ENCODE measurements at regions of chr2 and their contacts with region 1.

Region 1: GRCh38 chr2:197705121-197705911 is at the start of gene MARS2:
- DNase-seq: peak; percentile 70 to 89
- H3K4me3 ChIP-seq: peak within 1 kb of the TSS; percentile 98
- H3K27ac ChIP-seq: no peak within 1 kb of the TSS
- H3K4me1 ChIP-seq: peaks cover 15% of the 10 kb centered on the region
- H3K27me3 ChIP-seq: no peaks in the 10 kb centered on the region
- CTCF ChIP-seq: no peak
- total RNA-seq, gene MARS2: 5.1 and 6.0 TPM in 2 replicates

Region 2: DNA sequence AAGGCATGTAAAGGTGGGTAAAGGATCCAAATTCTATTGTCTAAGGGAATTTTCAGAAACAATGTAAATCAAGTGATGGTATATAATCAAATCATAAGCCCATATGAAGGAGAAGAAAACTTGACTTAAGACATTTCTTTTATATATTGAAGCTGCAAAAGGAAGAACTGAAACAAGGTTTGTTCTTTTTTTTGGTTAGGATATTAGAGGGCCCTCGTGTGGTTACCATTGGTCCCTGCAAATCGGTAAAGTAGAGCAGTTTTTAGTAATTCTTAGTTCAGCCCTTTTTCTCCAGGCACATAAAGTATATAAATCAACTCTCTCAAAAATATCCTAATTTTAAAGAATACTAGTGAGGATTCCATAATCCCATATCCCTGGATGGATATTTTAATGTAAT is 1428.3 kb before region 1 on chr2:
- CTCF ChIA-PET with region 1: no interaction called
- POLR2A ChIA-PET with region 1: no interaction called
- intact Hi-C with region 1: no loop called
- DNase-seq: no peak
- H3K4me3 ChIP-seq: no peak overlapping the region
- H3K27ac ChIP-seq: no peak overlapping the region
- H3K4me1 ChIP-seq: peaks cover 9% of the 10 kb centered on the region; the same call in 1 of the 2 replicates
- H3K27me3 ChIP-seq: no peaks in the 10 kb centered on the region
- CTCF ChIP-seq: peak; percentile 68

Region 3: GRCh38 chr2:197434541-197435513 is 270.5 kb before region 1 on chr2 and contains the start of gene SF3B1:
- CTCF ChIA-PET with region 1: no interaction called
- POLR2A ChIA-PET with region 1: no interaction called
- intact Hi-C with region 1: loop called (anchors 5 kb)
- DNase-seq: peak; percentile 93 to 97
- H3K4me3 ChIP-seq: peak within 1 kb of the TSS; percentile 77
- H3K27ac ChIP-seq: peak within 1 kb of the TSS; percentile 80
- H3K4me1 ChIP-seq: peaks cover 24% of the 10 kb centered on the region
- H3K27me3 ChIP-seq: no peaks in the 10 kb centered on the region
- CTCF ChIP-seq: no peak
- total RNA-seq, gene SF3B1: 127 and 156 TPM in 2 replicates

Region 4: GRCh38 chr2:197515739-197516392 is 189.4 kb before region 1 on chr2 and contains the start of gene MOB4:
- CTCF ChIA-PET with region 1: no interaction called
- POLR2A ChIA-PET with region 1: interaction called, 6 read pairs
- intact Hi-C with region 1: loop called (anchors 5 kb)
- DNase-seq: peak; percentile 80 to 95
- H3K4me3 ChIP-seq: peak within 1 kb of the TSS; percentile 95
- H3K27ac ChIP-seq: peak within 1 kb of the TSS; percentile 50
- H3K4me1 ChIP-seq: peaks cover 24% of the 10 kb centered on the region
- H3K27me3 ChIP-seq: no peaks in the 10 kb centered on the region
- CTCF ChIP-seq: no peak
- total RNA-seq, gene MOB4: 19.9 and 20.1 TPM in 2 replicates

Region 5: GRCh38 chr2:197786010-197786877 is 80.9 kb after region 1 on chr2:
- CTCF ChIA-PET with region 1: no interaction called
- POLR2A ChIA-PET with region 1: no interaction called
- intact Hi-C with region 1: no loop called
- DNase-seq: no peak
- H3K4me3 ChIP-seq: no peak overlapping the region
- H3K27ac ChIP-seq: no peak overlapping the region
- H3K4me1 ChIP-seq: no peaks in the 10 kb centered on the region
- H3K27me3 ChIP-seq: no peaks in the 10 kb centered on the region
- CTCF ChIP-seq: no peak

Region 6: GRCh38 chr2:198127627-198128026 is 422.3 kb after region 1 on chr2:
- CTCF ChIA-PET with region 1: no interaction called
- POLR2A ChIA-PET with region 1: no interaction called
- intact Hi-C with region 1: loop called (anchors 10 kb)
- DNase-seq: peak in 1 of 2 experiments; percentile 7
- H3K4me3 ChIP-seq: no peak overlapping the region
- H3K27ac ChIP-seq: no peak overlapping the region
- H3K4me1 ChIP-seq: no peaks in the 10 kb centered on the region
- H3K27me3 ChIP-seq: no peaks in the 10 kb centered on the region
- CTCF ChIP-seq: peak; percentile 68

Region 7: DNA sequence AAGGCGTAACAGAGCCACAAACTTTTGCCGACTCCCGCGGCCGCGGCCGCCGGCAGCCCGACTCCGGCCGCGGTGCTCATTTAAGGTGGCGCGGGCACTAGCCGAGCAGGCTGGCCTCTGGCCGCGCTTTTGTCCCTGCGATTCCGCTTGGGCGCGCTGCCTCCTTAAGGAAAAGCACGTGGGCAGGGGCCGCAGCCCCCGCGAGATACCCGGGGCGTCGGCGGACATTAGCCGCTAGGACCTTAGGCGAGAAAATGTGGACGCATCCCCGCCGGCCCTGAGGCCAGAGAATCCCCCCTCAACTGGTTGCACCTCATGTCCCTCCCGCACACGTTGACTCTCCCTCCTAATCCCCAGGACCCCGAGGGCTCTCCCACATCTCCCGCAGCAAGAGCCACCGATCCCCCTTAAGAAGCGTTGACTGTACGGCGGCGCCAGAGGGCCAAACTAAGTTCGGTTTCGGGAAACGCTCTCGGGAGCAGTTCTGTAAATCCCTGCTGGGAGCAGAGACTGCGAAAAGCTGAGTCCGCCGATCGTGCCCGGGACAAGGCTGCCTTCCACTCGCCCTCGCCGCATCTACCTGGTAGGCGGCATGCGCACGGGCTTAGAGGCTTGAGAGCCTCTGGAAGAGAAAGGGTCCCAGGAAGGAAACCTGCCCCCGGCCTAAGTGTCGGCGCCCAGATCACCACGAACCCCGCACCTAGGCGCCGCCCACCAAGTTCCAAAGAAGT is 1754.1 kb after region 1 on chr2:
- CTCF ChIA-PET with region 1: no interaction called
- POLR2A ChIA-PET with region 1: no interaction called
- intact Hi-C with region 1: loop called (anchors 5 kb)
- DNase-seq: peak; percentile 76 to 81
- H3K4me3 ChIP-seq: peak overlapping the region; percentile 69
- H3K27ac ChIP-seq: peak overlapping the region; percentile 78
- H3K4me1 ChIP-seq: peaks cover 24% of the 10 kb centered on the region
- H3K27me3 ChIP-seq: no peaks in the 10 kb centered on the region
- CTCF ChIP-seq: no peak

Measured in PC-9 (cell line).